ENCODE measurements at regions of chr16 and their contacts with region 1.

Region 1: DNA sequence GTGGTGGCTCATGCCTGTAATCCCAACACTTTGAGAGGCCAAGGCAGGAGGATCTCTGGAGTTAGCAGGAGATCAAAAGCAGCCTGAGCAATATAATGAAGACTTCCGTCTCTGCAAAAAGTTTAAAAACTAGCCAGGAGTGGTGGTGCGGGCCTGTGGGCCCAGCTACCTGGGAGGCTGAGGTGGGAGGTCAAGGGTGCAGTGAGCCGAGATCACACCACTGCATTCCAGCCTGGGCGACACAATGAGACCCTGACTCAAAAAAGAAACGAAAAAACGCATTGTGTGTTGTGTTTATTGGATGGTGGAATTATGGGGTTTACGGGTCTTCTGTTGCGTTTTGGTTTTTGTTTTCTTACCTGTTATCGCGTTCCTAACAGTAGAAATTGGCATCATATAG is 863 bp upstream of the DDX19A start:
- DNase-seq: no peak
- ATAC-seq: no peak
- H3K4me3 ChIP-seq: peak overlapping the region; percentile 91
- H3K27ac ChIP-seq: 0 out of 2 replicates have a peak overlapping the region, but pooled peaks have one; percentile 47
- H3K4me1 ChIP-seq: peaks cover 9% of the 10 kb centered on the region; the same call in 1 of the 2 replicates
- H3K27me3 ChIP-seq: no peaks in the 10 kb centered on the region
- CTCF ChIP-seq: no peak

Region 2: DNA sequence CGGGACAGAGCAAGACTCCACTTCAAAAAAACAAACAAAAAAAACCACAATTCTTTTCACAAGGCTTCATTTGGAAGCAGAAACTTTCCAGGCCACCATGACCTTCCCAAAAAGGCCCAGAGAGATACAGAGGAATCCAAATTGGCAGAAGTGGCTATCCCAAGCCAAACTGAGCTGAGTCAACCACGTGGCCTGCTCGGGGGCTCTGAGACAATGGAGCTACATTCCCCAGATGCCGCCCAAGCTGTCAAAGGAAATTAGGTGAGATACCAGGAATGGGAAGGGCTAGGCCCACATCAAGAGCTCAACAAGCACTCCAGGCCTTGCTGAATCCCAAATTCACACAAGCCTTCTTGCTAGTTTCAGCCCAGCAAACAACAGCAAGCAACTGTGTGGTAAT is 88.4 kb before region 1 on chr16:
- CTCF ChIA-PET with region 1: no interaction called
- POLR2A ChIA-PET with region 1: no interaction called
- intact Hi-C with region 1: no loop called
- DNase-seq: no peak
- ATAC-seq: no peak
- H3K4me3 ChIP-seq: no peak overlapping the region
- H3K27ac ChIP-seq: no peak overlapping the region
- H3K4me1 ChIP-seq: no peaks in the 10 kb centered on the region
- H3K27me3 ChIP-seq: no peaks in the 10 kb centered on the region
- CTCF ChIP-seq: no peak

Region 3: DNA sequence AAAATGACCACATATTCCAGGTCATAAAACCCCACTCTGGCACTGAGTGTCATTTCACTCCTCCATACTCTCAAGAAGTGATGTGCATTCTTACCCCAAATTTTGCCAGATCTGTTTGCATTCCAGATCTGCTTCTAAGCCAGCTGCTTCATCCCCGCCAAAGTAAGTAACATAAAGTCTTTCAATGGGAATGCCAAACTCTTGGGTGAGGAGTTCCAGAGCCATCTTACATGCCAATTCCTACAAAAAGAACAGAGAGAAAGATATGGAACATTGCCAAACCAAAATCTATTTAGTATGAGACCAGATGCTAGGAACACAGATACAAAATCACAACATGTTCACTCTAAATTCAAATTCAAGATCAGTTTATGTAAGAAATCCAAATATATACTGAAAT is 69.4 kb before region 1 on chr16:
- CTCF ChIA-PET with region 1: no interaction called
- POLR2A ChIA-PET with region 1: no interaction called
- intact Hi-C with region 1: no loop called
- DNase-seq: no peak
- ATAC-seq: no peak
- H3K4me3 ChIP-seq: no peak overlapping the region
- H3K27ac ChIP-seq: no peak overlapping the region
- H3K4me1 ChIP-seq: no peaks in the 10 kb centered on the region
- H3K27me3 ChIP-seq: no peaks in the 10 kb centered on the region
- CTCF ChIP-seq: no peak

Region 4: GRCh38 chr16:70298988-70299938 is 46.6 kb before region 1 on chr16 and contains the start of gene DDX19B:
- CTCF ChIA-PET with region 1: no interaction called
- POLR2A ChIA-PET with region 1: interaction called, 4 read pairs
- intact Hi-C with region 1: loop called (anchors 2 kb)
- DNase-seq: peak; percentile 38
- ATAC-seq: peak; percentile 69
- H3K4me3 ChIP-seq: peak within 1 kb of the TSS; percentile 95
- H3K27ac ChIP-seq: peak within 1 kb of the TSS; percentile 70
- H3K4me1 ChIP-seq: peaks cover 21% of the 10 kb centered on the region
- H3K27me3 ChIP-seq: no peaks in the 10 kb centered on the region
- CTCF ChIP-seq: no peak
- total RNA-seq, gene DDX19B: 18.1 and 21.5 TPM in 2 replicates

Region 5: DNA sequence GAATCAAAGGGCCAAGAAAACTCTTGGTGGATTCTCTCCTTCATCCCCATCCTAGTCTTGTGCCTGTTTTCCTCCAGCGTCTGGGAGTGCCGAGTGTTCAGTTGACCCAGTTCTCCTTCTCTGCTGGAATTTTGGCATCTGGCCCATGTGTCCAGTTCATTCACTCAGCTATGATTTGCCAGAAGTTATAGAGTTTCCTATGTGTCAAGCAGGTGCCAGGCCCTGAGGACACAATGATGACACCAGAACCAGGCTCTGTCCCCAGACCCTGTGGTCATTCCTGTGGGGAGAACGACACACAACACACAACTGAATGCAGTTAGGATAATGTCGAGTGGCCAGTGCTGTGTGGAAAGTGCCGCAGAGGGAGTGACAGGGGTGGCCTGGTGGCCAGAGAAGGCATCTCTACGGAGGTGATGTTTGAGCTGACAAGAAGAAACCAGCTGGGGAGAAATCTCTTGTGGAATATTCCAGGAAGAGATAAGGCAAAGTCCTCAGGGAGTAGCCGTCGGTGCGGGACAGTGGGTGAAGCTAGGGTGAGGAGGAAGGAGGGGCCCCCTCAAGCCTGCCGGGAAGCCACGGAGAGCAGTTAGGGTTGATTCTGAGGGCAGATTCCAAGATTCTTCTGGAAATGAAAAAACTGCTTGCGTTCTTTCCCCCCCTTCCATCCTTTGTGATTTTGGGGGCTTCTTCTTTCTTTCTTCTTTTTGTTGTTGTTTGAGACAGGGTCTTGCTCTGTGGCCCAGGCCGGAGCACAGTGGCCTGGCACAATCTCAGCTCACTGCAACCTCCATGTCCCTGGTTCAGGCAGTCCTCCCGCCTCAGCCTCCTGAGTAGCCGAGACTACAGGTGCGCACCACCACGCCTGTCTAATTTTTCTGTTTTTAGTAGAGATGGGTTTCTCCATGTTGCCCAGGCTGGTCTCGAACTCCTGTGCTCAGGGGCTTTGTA is 264.7 kb after region 1 on chr16:
- CTCF ChIA-PET with region 1: no interaction called
- POLR2A ChIA-PET with region 1: no interaction called
- intact Hi-C with region 1: no loop called
- DNase-seq: no peak
- ATAC-seq: no peak
- H3K4me3 ChIP-seq: no peak overlapping the region
- H3K27ac ChIP-seq: no peak overlapping the region
- H3K4me1 ChIP-seq: no peaks in the 10 kb centered on the region; the same call in 1 of the 2 replicates
- H3K27me3 ChIP-seq: no peaks in the 10 kb centered on the region
- CTCF ChIP-seq: no peak

Measured in PC-3 (cell line).